Ovary (tissue), 10 donors: ENCODE measurements at regions of chr12 and their contacts with region 1.

Region 1: DNA sequence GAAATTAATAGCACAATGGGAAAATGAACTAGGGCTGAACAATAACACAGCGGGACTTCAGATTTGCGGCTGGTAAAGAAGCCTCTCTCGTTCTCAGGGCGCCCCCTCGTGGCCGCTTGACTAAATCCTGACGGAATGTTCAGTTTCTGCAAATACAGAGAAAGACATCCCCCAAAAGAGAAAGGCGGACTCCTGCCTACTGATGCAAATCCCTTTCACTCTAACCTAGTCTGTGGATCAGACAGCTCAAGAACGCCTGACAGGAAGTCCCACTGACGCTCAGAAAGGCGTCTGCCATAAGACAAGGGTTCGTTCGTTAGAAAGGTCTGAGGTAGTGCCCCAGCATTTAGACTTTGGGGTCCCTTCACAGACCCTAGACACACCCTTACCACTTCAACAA is 2.5 kb downstream of the NUAK1 start:
- DNase-seq: peak; percentile 85 to 95 (median 94)
- H3K4me3 ChIP-seq: peak overlapping the region; percentile 86
- H3K27ac ChIP-seq: peak overlapping the region in 1 of 2 donors; percentile 1
- H3K4me1 ChIP-seq: peaks cover 28% of the 10 kb centered on the region
- H3K27me3 ChIP-seq: no peaks in the 10 kb centered on the region
- CTCF ChIP-seq: peak; percentile 74 to 82 (median 80)
- EP300 ChIP-seq: no peak
- POLR2A ChIP-seq: no peak

Region 2: DNA sequence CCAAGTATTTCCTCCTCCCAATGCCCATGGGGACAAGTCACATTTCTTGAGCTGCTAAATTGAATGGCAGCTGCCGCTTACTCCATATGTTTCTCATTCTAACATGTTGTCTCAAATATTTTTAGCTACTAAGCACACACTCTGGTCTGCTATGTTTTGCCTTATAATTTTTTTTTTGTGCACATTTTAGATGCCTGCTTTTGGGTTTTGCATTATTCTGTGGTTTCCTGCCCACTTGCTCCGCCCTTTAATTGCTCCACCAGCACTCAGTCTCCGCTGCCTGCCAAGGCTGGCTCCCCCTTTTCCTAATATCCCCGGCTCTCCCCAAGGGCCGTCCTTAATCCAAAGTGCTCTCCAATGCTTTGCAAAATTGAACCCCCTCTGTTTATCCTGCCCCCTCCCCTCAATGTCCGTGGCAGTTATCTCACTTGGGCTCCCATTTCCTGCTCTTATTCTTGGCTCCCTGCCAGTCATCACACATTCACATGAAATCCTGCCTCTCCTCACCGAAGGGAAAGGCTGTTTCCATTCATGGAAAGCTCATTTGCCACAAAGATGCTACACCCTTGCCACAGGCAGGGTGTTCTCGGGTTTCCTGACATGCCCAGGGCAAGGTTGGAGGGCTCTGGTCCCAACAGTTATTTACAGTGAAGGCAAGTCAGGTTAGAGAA is 726.3 kb before region 1 on chr12:
- intact Hi-C with region 1: loop called in 1 of 4 experiments (anchors 10 kb)
- DNase-seq: peak in 1 of 5 donors; percentile 24
- H3K4me3 ChIP-seq: no peak overlapping the region
- H3K27ac ChIP-seq: no peak overlapping the region
- H3K4me1 ChIP-seq: no peaks in the 10 kb centered on the region
- H3K27me3 ChIP-seq: no peaks in the 10 kb centered on the region
- CTCF ChIP-seq: no peak
- EP300 ChIP-seq: no peak
- POLR2A ChIP-seq: no peak

Region 3: GRCh38 chr12:105420659-105421240 is 715.5 kb before region 1 on chr12:
- intact Hi-C with region 1: loop called (anchors 5 to 10 kb)
- DNase-seq: peak; percentile 62 to 80 (median 74)
- H3K4me3 ChIP-seq: no peak overlapping the region
- H3K27ac ChIP-seq: no peak overlapping the region
- H3K4me1 ChIP-seq: no peaks in the 10 kb centered on the region
- H3K27me3 ChIP-seq: no peaks in the 10 kb centered on the region
- CTCF ChIP-seq: peak; percentile 69 to 84 (median 75)
- EP300 ChIP-seq: no peak
- POLR2A ChIP-seq: no peak

Region 4: GRCh38 chr12:105705765-105706164 is 430.5 kb before region 1 on chr12:
- intact Hi-C with region 1: loop called (anchors 5 to 10 kb)
- DNase-seq: peak; percentile 41 to 79 (median 46)
- H3K4me3 ChIP-seq: no peak overlapping the region
- H3K27ac ChIP-seq: no peak overlapping the region
- H3K4me1 ChIP-seq: no peaks in the 10 kb centered on the region
- H3K27me3 ChIP-seq: no peaks in the 10 kb centered on the region
- CTCF ChIP-seq: peak; percentile 41 to 73 (median 70)
- EP300 ChIP-seq: no peak
- POLR2A ChIP-seq: no peak

Region 5: GRCh38 chr12:106078358-106079010 is 57.8 kb before region 1 on chr12:
- intact Hi-C with region 1: loop called in 1 of 4 experiments (anchors 10 kb)
- DNase-seq: no peak
- H3K4me3 ChIP-seq: no peak overlapping the region
- H3K27ac ChIP-seq: no peak overlapping the region
- H3K4me1 ChIP-seq: peaks cover 8% of the 10 kb centered on the region
- H3K27me3 ChIP-seq: no peaks in the 10 kb centered on the region
- CTCF ChIP-seq: no peak
- EP300 ChIP-seq: no peak
- POLR2A ChIP-seq: no peak

Region 6: DNA sequence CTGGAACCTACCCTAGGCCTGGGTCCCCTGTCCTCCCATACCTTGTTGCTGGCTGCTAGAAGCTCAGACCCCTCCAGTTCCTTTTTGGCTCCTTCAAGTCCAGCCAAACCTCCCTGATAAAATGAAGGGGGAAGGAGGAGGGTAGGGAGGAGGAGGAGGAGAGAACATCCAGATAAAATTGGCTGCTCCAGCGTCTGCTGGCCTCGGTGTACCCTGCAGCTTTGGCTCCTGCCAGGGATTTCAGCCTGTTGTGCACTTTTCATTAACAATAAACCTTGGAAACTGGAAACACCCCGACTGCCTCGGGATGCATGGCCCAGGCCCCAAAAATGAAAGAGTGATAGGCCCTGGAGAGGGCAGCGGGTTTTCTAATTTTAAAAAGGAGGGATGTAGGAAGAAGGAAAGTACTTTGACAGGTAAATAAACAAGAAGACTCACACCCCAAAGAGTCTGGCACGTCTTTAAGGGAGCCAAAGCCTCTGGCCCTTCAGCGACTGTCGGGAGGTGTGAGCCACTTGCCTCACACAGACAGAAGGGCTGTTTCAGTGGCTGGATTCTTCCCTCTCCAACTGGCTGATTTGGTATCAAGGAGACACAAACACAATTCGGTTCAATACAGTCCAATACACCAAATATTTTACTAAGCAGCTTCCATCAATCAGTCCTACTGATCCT is 47.3 kb before region 1 on chr12:
- intact Hi-C with region 1: loop called in 1 of 4 experiments (anchors 5 kb)
- DNase-seq: peak; percentile 61 to 84 (median 76)
- H3K4me3 ChIP-seq: no peak overlapping the region
- H3K27ac ChIP-seq: peak overlapping the region; percentile 13 to 80
- H3K4me1 ChIP-seq: peaks cover 22% of the 10 kb centered on the region
- H3K27me3 ChIP-seq: no peaks in the 10 kb centered on the region
- CTCF ChIP-seq: no peak
- EP300 ChIP-seq: no peak
- POLR2A ChIP-seq: no peak